GM12878 (cell line): ENCODE measurements at regions of chr12 and their contacts with region 1.

Region 1: DNA sequence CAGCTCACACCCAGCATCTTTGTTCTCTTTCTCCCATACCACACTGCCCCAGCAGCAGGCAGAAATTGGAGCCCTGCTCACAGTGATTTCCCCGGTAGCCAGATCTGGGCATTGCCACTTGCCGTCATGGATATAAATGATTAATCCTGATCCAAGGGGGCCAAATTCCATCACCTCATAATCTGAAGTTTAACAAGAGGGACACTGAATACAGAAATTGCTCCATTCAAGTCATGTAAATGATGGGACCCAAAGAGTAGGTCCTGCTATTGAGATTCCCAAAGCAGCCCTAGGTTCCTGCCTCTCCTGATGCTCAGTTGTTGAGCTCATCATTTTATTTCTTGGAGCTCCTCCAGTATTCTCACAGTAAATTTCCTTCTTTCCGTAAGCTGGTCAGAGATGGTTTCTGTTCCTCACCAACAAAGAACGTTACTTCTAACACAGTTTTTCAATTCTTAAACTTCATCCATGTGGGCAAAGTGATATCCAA is 11.7 kb downstream of the ITPR2 start:
- DNase-seq: no peak
- ATAC-seq: no peak
- H3K4me3 ChIP-seq: no peak overlapping the region
- H3K27ac ChIP-seq: no peak overlapping the region; the same call in 1 of the 2 replicates
- H3K4me1 ChIP-seq: peaks cover 24% of the 10 kb centered on the region; the same call in 1 of the 2 replicates
- H3K27me3 ChIP-seq: no peaks in the 10 kb centered on the region
- CTCF ChIP-seq: no peak
- EP300 ChIP-seq: no peak
- POLR2A ChIP-seq: no peak
- RAD21 ChIP-seq: no peak

Region 2: GRCh38 chr12:26768611-26769603 is 52.4 kb before region 1 on chr12:
- CTCF ChIA-PET with region 1: no interaction called
- POLR2A ChIA-PET with region 1: no interaction called
- RAD21 ChIA-PET with region 1: no interaction called
- SMC1A ChIA-PET with region 1: interaction called, 11 read pairs
- in situ Hi-C with region 1: no loop called
- intact Hi-C with region 1: no loop called
- DNase-seq: no peak
- ATAC-seq: peak; percentile 75
- H3K4me3 ChIP-seq: no peak overlapping the region
- H3K27ac ChIP-seq: peak overlapping the region; percentile 67
- H3K4me1 ChIP-seq: peaks cover 32% of the 10 kb centered on the region
- H3K27me3 ChIP-seq: no peaks in the 10 kb centered on the region
- CTCF ChIP-seq: no peak
- EP300 ChIP-seq: no peak
- POLR2A ChIP-seq: no peak
- RAD21 ChIP-seq: no peak

Region 3: DNA sequence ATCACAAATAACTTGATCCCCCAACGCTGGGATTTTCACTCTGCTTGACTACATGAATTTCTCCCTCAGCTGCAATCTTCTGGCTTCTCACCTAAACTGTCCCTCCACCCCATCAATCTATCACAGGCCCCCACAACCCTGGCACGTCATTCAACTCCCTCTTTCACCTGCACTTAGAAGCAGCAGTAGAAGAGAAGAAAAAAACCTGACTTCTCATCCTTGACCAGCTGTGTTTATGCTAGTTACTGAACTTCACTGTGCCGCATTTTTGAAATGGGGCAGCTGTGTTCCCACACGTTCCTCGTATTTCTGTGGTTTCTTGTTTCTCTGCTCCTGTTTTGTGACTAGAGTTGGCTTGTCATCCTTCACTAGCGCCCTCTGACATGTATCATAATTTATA is 23.2 kb before region 1 on chr12:
- CTCF ChIA-PET with region 1: no interaction called
- POLR2A ChIA-PET with region 1: interaction called, 5 read pairs
- RAD21 ChIA-PET with region 1: interaction called, 3 read pairs
- SMC1A ChIA-PET with region 1: interaction called, 29 read pairs
- in situ Hi-C with region 1: no loop called
- intact Hi-C with region 1: no loop called
- DNase-seq: peak; percentile 53
- ATAC-seq: peak; percentile 82
- H3K4me3 ChIP-seq: peak overlapping the region; percentile 29; the same call in 1 of the 2 replicates
- H3K27ac ChIP-seq: peak overlapping the region; percentile 22; the same call in 1 of the 2 replicates
- H3K4me1 ChIP-seq: peaks cover 24% of the 10 kb centered on the region
- H3K27me3 ChIP-seq: no peaks in the 10 kb centered on the region
- CTCF ChIP-seq: no peak
- EP300 ChIP-seq: no peak
- POLR2A ChIP-seq: no peak
- RAD21 ChIP-seq: no peak

Region 4: DNA sequence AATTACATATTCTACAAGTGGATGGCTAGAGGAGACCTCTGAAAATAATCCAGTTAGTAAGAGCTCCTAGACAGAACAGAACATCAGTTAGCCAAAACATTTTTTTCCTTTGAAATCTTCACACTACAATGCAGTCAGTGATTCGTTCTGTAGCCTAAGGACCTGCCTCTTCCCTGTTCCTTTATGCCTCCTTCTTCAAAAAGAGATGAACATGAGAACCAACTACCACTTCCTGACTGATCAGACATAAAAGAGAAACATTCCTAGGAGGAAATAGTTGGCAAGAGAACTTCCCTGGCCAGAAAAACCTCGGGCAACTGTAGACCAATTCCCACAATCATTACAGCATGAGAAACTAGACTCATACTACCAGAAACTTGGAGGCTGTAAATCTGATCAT is 17.7 kb before region 1 on chr12:
- CTCF ChIA-PET with region 1: interaction called, 4 read pairs
- POLR2A ChIA-PET with region 1: interaction called, 5 read pairs
- RAD21 ChIA-PET with region 1: interaction called, 4 read pairs
- SMC1A ChIA-PET with region 1: interaction called, 29 read pairs
- in situ Hi-C with region 1: no loop called
- intact Hi-C with region 1: no loop called
- DNase-seq: no peak
- ATAC-seq: no peak
- H3K4me3 ChIP-seq: no peak overlapping the region
- H3K27ac ChIP-seq: no peak overlapping the region
- H3K4me1 ChIP-seq: peaks cover 22% of the 10 kb centered on the region
- H3K27me3 ChIP-seq: no peaks in the 10 kb centered on the region
- CTCF ChIP-seq: no peak
- EP300 ChIP-seq: no peak
- POLR2A ChIP-seq: no peak
- RAD21 ChIP-seq: no peak

Region 5: DNA sequence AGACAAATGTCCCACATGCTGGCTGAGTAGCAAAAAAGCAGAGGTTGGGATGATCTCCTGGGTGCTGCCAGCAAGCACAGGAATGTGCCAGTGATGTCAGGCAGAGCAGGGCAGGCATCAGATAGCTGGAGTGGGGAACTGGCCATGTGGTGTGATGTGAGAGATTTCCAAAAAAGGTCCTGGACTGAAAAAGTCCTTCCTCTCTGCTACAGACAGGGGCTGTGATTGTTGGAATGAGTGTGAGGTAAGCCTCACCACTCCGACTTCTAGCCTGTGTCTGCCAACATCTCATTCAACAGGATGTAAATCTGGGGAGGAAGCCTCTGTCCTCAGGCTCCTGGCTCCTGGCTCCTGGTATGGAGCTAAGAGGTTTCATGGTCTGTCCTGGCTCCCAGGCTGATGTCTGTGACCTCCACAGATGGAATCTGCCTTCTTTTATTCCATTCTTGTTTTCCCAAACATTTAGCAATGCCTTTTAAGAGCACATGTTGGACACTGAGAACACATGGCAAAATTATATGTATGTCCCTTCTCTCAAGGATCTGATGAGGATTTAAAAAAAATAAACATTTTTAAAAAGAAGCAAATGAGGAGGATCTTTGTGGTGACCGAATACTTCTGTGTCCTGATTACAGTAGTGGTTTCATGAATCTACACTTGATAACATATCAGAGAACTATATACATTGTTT is 372.7 kb after region 1 on chr12:
- CTCF ChIA-PET with region 1: no interaction called
- POLR2A ChIA-PET with region 1: no interaction called
- RAD21 ChIA-PET with region 1: no interaction called
- SMC1A ChIA-PET with region 1: no interaction called
- in situ Hi-C with region 1: no loop called
- intact Hi-C with region 1: no loop called
- DNase-seq: no peak
- ATAC-seq: no peak
- H3K4me3 ChIP-seq: no peak overlapping the region
- H3K27ac ChIP-seq: no peak overlapping the region
- H3K4me1 ChIP-seq: no peaks in the 10 kb centered on the region
- H3K27me3 ChIP-seq: no peaks in the 10 kb centered on the region
- CTCF ChIP-seq: no peak
- EP300 ChIP-seq: no peak
- POLR2A ChIP-seq: no peak
- RAD21 ChIP-seq: no peak